Vagina (tissue), 2 donors: ENCODE measurements at regions of chr7 and their contacts with region 1.

Region 1: DNA sequence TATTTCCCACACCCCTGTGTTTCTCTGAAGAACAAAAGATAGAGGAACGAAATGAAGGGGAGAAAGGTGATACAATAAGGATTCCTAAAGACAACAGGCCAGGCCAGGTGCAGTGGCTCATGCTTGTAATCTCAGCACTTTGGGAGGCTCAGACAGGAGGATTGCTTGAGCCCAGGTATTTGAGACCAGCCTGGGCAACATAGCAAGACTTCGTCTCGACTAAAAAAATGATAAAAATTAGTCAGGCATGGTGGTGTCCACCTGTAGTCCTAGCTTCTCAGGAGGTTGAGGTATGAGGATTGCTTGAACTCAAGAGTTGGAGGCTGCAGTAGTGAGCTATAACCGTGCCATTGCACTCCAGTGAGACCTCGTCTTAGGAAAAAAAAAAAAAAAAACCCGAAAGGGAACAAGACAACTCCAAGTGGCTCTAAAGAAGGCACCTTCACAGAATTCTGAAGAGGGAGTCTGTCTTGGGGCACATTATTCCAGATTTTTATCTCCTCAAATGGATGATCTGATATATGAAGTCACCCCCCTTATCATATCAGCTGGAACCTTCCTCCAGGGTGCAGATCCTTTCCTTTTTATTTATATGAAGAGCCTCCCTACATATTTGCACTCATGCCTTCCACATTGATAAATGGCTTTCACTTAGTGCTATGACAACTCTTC is 41.5 kb upstream of the FAM3C start:
- DNase-seq: no peak
- H3K4me3 ChIP-seq: peak overlapping the region in 1 of 2 donors; percentile 34
- H3K27ac ChIP-seq: no peak overlapping the region
- H3K4me1 ChIP-seq: peaks cover 11% of the 10 kb centered on the region
- H3K27me3 ChIP-seq: no peaks in the 10 kb centered on the region
- CTCF ChIP-seq: no peak
- POLR2A ChIP-seq: no peak

Region 2: GRCh38 chr7:121126801-121127534 is 310.6 kb before region 1 on chr7:
- intact Hi-C with region 1: no loop called
- DNase-seq: no peak
- H3K4me3 ChIP-seq: no peak overlapping the region
- H3K27ac ChIP-seq: no peak overlapping the region
- H3K4me1 ChIP-seq: no peaks in the 10 kb centered on the region
- H3K27me3 ChIP-seq: no peaks in the 10 kb centered on the region
- CTCF ChIP-seq: peak in 1 of 3 experiments; percentile 11
- POLR2A ChIP-seq: no peak

Region 3: DNA sequence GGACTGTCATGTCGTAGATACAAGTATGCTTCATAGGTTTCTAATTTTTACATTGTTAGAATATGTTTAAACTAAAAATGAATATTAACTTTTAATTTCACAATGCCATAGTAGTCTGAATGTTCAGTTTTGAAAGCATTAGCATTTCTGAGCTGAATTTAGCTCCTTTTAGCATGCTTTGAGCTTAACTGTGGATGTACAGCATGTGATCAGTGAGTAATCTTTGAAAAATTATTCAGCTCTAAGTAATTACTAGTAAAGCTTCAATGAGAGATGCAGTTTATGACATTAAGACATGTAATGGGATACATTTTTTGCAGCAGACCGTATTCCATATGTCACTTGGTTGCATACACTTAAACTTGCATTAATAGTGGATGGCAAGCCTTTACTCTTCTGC is 222.9 kb before region 1 on chr7:
- intact Hi-C with region 1: loop called (anchors 5 kb)
- DNase-seq: no peak
- H3K4me3 ChIP-seq: no peak overlapping the region
- H3K27ac ChIP-seq: no peak overlapping the region
- H3K4me1 ChIP-seq: no peaks in the 10 kb centered on the region
- H3K27me3 ChIP-seq: no peaks in the 10 kb centered on the region
- CTCF ChIP-seq: no peak
- POLR2A ChIP-seq: no peak